Upper lobe of right lung (tissue), 1 donor: ENCODE measurements at regions of chr3 and their contacts with region 1.

Region 1: GRCh38 chr3:31132132-31132769 is 237.8 kb upstream of the GADL1 start:
- DNase-seq: no peak
- ATAC-seq: peak; percentile 79
- H3K4me3 ChIP-seq: no peak overlapping the region
- H3K27ac ChIP-seq: no peak overlapping the region
- H3K4me1 ChIP-seq: no peaks in the 10 kb centered on the region
- H3K27me3 ChIP-seq: no peaks in the 10 kb centered on the region
- CTCF ChIP-seq: peak; percentile 60

Region 2: DNA sequence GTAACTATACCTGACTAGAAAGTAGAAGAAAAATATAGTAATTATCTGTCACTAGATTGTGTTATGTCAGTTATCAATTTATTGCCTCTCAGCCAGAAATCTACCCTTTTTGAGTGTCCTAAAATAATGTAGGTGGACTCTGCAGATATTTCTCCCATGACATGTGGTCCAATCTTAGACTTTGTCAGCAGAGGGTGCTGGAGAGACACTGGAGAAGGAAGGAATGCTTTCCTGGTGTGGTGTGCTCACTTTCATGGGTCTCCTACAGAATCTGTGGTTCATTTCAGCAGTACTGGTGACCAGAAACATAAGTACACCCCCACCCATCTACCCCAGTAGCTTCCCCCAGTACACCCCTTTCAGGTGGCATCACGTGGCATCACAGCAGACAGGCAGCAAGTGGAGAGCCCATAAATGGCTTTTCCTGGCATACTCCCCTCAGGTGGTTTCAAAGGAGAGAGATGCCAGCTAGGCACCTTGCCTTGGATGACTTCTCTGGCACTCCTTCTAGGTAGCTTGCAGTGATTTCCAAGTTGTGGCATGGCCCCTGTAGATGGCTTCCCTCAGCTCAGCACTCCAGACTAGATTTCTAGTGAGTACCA is 352.5 kb before region 1 on chr3:
- intact Hi-C with region 1: loop called (anchors 10 kb)
- DNase-seq: no peak
- ATAC-seq: peak; percentile 74
- H3K4me3 ChIP-seq: no peak overlapping the region
- H3K27ac ChIP-seq: no peak overlapping the region
- H3K4me1 ChIP-seq: no peaks in the 10 kb centered on the region
- H3K27me3 ChIP-seq: no peaks in the 10 kb centered on the region
- CTCF ChIP-seq: peak; percentile 53